ENCODE measurements at regions of chr6 and their contacts with region 1.

Region 1: GRCh38 chr6:15621203-15622044 is 41.4 kb downstream of the DTNBP1 start:
- DNase-seq: no peak
- ATAC-seq: peak; percentile 79
- H3K4me3 Mint-ChIP-seq: no peak overlapping the region
- H3K27ac Mint-ChIP-seq: peak overlapping the region; percentile 38
- H3K4me1 Mint-ChIP-seq: peaks cover 34% of the 10 kb centered on the region
- H3K27me3 Mint-ChIP-seq: no peaks in the 10 kb centered on the region
- CTCF ChIP-seq: no peak

Region 2: GRCh38 chr6:14144678-14145113 is 1476.7 kb before region 1 on chr6:
- CTCF ChIA-PET with region 1: no interaction called
- POLR2A ChIA-PET with region 1: no interaction called
- intact Hi-C with region 1: loop called (anchors 5 kb)
- DNase-seq: peak; percentile 63
- ATAC-seq: peak; percentile 84
- H3K4me3 Mint-ChIP-seq: peak overlapping the region; percentile 20
- H3K27ac Mint-ChIP-seq: peak overlapping the region; percentile 62
- H3K4me1 Mint-ChIP-seq: peaks cover 42% of the 10 kb centered on the region
- H3K27me3 Mint-ChIP-seq: no peaks in the 10 kb centered on the region
- CTCF ChIP-seq: peak; percentile 57

Region 3: DNA sequence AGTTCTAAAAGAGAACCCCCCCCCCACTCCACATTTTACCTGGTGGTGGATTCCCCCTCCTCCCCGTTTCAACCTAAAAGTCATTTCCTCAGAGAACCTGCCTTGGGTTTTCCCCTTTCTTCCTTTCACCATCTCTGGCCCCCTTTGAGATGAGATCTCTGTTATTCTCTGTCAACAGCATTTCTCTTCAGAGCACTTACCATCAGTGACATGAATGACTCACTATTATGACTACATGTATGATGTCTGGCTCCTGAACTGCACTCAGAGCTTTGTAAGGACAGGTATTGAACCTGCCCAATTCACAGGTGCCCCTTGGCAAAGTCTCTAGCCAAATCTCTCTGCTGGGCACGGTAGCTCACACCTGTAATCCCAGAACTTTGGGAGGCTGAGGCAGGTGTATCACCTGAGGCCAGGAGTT is 437.0 kb before region 1 on chr6:
- CTCF ChIA-PET with region 1: no interaction called
- POLR2A ChIA-PET with region 1: no interaction called
- intact Hi-C with region 1: loop called (anchors 5 kb)
- DNase-seq: no peak
- ATAC-seq: peak; percentile 96
- H3K4me3 Mint-ChIP-seq: no peak overlapping the region
- H3K27ac Mint-ChIP-seq: peak overlapping the region; percentile 6
- H3K4me1 Mint-ChIP-seq: peaks cover 12% of the 10 kb centered on the region
- H3K27me3 Mint-ChIP-seq: no peaks in the 10 kb centered on the region
- CTCF ChIP-seq: no peak

Region 4: DNA sequence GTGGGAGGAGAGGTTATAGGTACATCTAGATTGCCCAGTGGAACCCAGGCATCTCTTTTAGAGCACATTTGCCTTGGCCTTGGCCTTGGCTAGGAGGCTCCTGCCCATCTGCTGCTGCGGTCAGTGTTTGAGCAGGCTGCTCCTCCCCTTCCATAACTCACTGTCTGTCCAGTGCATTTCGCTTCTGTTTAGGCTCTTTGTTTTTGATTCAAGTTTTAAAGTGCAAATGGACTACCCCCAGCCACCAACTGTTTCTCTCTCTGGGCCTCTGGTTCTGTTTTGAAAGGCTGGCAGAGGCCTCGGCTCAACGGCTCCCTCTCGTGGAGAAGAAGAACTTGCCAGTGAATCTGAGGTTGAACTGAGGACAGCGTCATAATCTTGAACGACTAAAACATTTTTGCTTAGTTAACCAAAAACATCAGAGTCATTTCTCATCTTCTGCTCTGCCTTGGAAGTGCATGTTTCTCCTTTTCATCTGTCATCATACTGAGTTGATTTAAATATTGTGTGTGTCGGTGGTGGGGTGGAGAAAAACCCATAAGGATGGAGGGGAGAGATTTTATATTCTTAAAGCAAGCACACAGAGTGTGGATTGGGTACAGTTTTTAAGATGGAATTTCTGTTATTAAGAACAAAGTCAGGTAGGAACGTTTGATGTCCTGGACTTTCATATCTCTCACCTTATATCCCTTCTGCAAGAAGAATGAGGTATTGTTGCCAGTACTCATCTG is 130.0 kb before region 1 on chr6:
- CTCF ChIA-PET with region 1: interaction called, 6 read pairs
- POLR2A ChIA-PET with region 1: no interaction called
- intact Hi-C with region 1: loop called (anchors 2 kb)
- DNase-seq: peak; percentile 35
- ATAC-seq: peak; percentile 82
- H3K4me3 Mint-ChIP-seq: no peak overlapping the region
- H3K27ac Mint-ChIP-seq: no peak overlapping the region
- H3K4me1 Mint-ChIP-seq: peaks cover 32% of the 10 kb centered on the region
- H3K27me3 Mint-ChIP-seq: no peaks in the 10 kb centered on the region
- CTCF ChIP-seq: peak; percentile 95

Region 5: GRCh38 chr6:15521582-15521981 is 99.8 kb before region 1 on chr6:
- CTCF ChIA-PET with region 1: interaction called, 3 read pairs
- POLR2A ChIA-PET with region 1: interaction called, 3 read pairs
- intact Hi-C with region 1: loop called (anchors 2 kb)
- DNase-seq: no peak
- ATAC-seq: no peak
- H3K4me3 Mint-ChIP-seq: no peak overlapping the region
- H3K27ac Mint-ChIP-seq: peak overlapping the region; percentile 53
- H3K4me1 Mint-ChIP-seq: peaks cover 17% of the 10 kb centered on the region
- H3K27me3 Mint-ChIP-seq: no peaks in the 10 kb centered on the region
- CTCF ChIP-seq: no peak

Region 6: DNA sequence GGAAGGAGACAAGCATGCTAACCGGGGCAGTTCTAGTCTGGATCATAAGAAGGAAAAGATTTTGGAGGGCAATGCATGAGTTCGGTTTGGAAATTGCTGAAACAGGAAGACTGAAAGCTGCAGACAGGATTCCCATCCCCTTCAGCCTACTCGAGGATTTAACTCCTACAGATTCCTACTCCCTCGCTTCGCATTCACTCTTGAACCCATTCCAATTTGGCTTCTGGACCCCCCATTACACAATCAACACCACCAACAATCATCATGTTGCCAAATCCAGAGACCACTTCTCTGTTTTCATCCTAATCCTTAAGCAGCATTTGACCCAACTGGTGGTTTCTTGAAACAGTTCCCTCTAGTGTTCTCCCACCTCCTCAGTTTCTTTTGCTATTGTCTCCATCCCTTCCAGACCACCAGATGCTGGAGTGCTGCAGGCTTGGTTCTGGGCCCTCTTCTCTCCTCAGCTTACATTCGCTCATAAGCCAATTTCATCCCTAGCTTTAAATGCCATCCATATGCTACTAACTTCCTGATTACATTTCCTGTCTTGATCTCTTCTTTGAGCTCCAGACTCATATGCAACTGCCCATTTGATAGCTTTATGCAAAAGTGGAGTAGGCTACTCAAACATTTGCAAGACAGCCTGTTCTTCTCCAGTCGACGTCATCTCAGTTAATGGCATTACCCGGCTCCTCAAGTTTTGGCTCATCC is 25.1 kb before region 1 on chr6:
- CTCF ChIA-PET with region 1: no interaction called
- POLR2A ChIA-PET with region 1: no interaction called
- intact Hi-C with region 1: no loop called
- DNase-seq: no peak
- ATAC-seq: no peak
- H3K4me3 Mint-ChIP-seq: no peak overlapping the region
- H3K27ac Mint-ChIP-seq: no peak overlapping the region
- H3K4me1 Mint-ChIP-seq: peaks cover 39% of the 10 kb centered on the region
- H3K27me3 Mint-ChIP-seq: no peaks in the 10 kb centered on the region
- CTCF ChIP-seq: no peak

Region 7: GRCh38 chr6:15682965-15683822 is 61.8 kb after region 1 on chr6:
- CTCF ChIA-PET with region 1: no interaction called
- POLR2A ChIA-PET with region 1: no interaction called
- intact Hi-C with region 1: no loop called
- DNase-seq: no peak
- ATAC-seq: no peak
- H3K4me3 Mint-ChIP-seq: no peak overlapping the region
- H3K27ac Mint-ChIP-seq: no peak overlapping the region
- H3K4me1 Mint-ChIP-seq: peaks cover 2% of the 10 kb centered on the region
- H3K27me3 Mint-ChIP-seq: no peaks in the 10 kb centered on the region
- CTCF ChIP-seq: no peak

Region 8: DNA sequence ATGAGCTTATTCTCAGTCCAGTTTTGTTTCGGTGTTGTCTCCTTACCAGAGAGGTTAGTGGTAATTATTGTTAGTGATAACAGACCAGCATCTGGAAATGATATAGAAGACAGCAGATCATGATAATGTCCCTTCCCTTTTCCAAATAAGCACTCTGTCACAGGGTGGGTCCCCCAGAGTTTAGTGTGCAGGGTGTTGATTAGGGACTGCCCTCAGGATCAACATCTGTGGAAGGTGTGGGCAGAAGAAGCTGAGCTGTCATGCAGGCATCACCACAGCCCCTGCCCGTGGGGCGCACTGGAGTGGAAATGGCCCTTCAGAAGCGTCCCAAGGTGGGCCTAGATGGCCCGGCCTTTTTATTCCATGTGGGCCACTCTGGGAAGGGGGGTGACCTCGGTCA is 109.0 kb after region 1 on chr6:
- CTCF ChIA-PET with region 1: no interaction called
- POLR2A ChIA-PET with region 1: no interaction called
- intact Hi-C with region 1: no loop called
- DNase-seq: no peak
- ATAC-seq: no peak
- H3K4me3 Mint-ChIP-seq: no peak overlapping the region
- H3K27ac Mint-ChIP-seq: no peak overlapping the region
- H3K4me1 Mint-ChIP-seq: no peaks in the 10 kb centered on the region
- H3K27me3 Mint-ChIP-seq: peaks cover 4% of the 10 kb centered on the region
- CTCF ChIP-seq: no peak

Region 9: GRCh38 chr6:16471222-16471909 is 849.9 kb after region 1 on chr6:
- CTCF ChIA-PET with region 1: no interaction called
- POLR2A ChIA-PET with region 1: no interaction called
- intact Hi-C with region 1: no loop called
- DNase-seq: peak; percentile 22
- ATAC-seq: peak; percentile 81
- H3K4me3 Mint-ChIP-seq: peak overlapping the region; percentile 28
- H3K27ac Mint-ChIP-seq: peak overlapping the region; percentile 88
- H3K4me1 Mint-ChIP-seq: peaks cover 69% of the 10 kb centered on the region
- H3K27me3 Mint-ChIP-seq: no peaks in the 10 kb centered on the region
- CTCF ChIP-seq: no peak

Measured in activated B cell treated with CpG ODN at 0.5 μM for 24 hours (primary cell).